Cardiac septum (tissue), 1 donor: ENCODE measurements at regions of chr13 and their contacts with region 1.

Region 1: DNA sequence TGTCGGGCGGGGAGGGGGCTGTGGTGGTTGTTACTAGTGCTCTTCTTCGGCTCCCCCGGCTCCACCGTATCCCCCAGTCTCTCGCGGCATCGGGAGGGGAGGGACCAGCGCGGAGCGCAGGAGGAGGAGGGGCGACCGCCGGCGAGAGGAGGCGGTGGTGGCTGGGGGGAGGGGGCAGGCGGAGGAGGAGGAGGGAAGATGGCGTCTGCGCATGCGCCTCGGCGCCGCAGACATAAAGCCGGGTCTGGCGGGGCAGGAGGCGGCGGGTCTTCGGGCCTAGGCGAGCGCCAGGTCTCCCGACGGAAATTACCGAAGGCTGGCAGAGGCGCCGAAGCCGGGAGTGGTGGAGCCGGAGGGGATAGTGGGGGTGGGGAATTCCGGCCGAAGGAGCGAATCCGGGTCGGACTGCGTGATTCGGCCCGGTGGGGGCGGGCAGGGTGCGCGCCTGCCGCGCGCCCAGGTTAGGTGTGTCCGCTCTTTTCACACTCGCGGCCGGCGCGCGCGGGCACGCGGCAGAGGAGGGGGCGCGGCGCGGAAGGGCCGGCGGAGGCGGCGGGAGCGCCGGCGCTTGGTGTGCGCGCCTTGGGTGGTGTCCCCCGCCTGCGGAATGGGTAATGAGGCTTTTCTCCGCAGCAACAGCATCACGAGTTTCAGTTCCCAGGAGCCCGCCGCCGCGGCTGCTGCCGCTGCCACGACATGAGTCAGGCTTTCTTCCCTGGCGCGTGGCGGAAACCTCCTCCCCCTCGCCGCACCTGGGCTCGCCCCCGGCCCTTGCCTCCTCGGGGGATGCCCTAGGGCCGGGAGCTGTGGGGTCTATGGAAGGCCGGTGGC is 1.3 kb upstream of the TSC22D1 start:
- DNase-seq: peak; percentile 97

Region 2: DNA sequence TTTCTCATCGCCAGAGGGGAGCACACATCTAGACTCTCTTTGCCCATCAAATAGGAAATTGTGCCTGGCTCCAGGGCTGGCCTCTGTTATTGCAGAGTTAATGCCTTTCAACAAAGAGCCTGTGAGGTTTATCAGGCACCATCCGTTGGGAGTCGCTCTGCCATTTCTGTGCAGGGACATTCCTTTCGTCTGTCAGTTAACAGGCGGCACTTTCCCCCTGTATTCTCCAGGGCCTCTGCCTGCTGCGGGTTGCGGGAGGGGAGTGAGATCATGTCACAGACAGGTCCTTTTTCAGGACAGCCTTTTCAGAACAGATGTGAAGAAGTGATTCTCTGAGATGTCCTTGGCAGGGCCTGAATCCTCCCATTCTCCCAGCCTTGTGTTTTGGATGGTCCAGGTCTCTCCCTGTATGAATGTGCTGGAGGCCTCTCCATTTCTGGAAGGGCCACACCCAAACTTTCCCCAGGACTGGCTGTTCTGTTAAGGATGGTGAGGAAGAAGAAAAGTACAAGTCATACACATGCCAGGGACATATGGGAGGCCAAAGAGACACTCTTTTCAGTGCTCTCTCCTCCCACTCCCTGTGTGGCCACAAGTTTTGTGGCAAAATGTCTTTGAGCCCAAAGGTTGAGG is 188.9 kb before region 1 on chr13:
- intact Hi-C with region 1: no loop called
- DNase-seq: no peak

Region 3: DNA sequence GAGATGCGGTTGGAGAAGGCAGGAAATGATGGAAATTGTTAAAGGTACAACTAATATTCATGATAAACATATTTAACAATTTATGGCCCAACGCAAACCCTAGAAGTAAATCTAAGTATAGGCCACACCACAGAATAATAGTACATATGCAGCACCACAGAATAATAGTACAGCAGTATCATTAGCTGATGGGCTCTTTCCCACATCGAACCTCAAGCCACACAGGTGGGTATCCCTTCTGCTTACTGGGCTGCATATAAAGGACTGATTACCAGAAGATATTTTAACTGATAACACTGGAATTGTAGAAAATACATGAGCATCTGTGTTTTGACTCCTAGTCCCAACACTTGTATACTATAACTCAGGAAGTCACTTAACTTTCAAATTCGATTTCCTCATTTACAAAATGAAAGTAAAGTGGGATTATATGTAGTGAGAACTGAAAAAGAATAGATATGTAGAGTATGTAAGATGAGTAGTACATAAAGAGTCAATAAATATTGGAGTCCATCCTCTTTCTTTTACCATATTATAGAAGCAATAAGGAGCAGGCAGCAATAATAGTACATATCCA is 92.8 kb before region 1 on chr13:
- intact Hi-C with region 1: loop called (anchors 2 kb)
- DNase-seq: no peak

Region 4: GRCh38 chr13:44609137-44609536 is 31.7 kb after region 1 on chr13:
- intact Hi-C with region 1: no loop called
- DNase-seq: no peak

Region 5: DNA sequence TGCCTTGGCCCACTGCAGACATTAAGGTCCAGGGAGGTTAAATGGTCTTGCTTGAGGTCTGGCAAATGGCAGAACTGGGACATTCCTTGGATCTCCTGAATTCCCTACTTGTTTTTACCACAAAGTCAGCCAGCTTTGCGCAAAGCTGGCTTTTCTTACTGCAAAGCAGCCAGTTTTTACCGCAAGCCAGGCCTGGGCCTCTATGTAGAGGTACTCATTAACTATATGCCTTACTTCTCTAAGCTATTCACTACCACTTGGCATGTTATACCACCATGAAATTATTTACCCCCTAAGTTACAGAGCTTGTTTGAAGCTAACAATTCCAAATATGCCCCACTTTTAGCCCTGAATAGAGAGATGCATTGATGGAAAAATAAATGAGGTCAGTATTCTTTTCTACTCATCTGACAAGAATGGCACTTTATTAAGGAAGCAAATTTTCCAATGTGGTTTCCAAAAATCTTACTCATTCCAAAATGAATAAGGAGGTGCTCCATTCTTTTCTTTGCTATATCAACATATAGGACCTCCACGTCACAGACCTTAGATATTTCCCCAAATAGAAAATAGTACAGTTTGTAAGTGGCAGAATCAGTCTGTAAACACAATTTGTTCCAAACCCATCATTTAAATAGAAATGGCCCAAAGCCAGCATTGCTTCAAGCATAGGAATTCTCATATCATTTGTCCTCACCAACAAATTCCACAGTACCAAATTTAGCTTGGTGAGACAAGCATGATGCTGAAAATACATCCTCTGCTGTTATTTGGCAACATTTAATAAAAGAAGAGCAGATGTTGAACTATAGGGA is 142.6 kb after region 1 on chr13:
- intact Hi-C with region 1: loop called (anchors 2 kb)
- DNase-seq: no peak

Region 6: DNA sequence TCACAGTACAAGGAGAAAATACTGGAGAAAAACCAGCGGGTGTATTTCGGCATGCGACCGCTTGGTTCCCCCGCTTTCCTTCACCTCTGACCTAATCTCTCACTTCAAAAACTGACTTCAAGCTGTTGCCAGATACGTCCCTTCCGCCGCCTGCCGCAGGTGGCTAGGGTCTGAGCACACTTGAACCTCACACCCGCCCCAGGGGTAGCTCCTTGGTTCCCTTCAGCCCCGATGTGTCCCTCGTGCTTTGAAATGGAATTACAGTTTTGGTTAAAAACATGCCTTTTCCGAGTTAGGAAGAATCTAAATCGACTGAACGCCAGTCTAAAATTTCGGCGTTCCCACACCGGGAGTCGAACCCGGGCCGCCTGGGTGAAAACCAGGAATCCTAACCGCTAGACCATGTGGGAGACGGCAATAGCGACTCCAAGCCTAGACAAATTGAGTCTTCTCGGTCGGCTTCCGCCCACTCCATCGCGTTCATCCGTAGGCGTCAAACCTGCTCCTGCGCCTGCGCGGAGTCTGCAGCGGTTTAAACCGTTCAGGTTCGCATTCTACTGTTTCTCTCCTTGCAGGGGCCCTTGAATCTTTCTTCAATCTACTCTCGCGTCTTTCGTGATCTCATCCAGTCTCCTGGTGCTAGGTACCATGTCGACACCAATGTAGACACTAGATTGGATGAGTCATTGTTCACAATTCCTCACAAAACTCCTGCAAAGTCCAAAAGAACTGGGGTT is 340.3 kb after region 1 on chr13:
- intact Hi-C with region 1: loop called (anchors 1 kb)
- DNase-seq: peak; percentile 96